Ovary (tissue), 10 donors: ENCODE measurements at regions of chr14 and their contacts with region 1.

Region 1: GRCh38 chr14:64636208-64636979 is 67.8 kb upstream of the PLEKHG3 start:
- DNase-seq: peak; percentile 57 to 82 (median 76)
- H3K4me3 ChIP-seq: no peak overlapping the region
- H3K27ac ChIP-seq: no peak overlapping the region
- H3K4me1 ChIP-seq: no peaks in the 10 kb centered on the region
- H3K27me3 ChIP-seq: no peaks in the 10 kb centered on the region
- CTCF ChIP-seq: peak; percentile 70 to 78 (median 73)
- EP300 ChIP-seq: no peak
- POLR2A ChIP-seq: no peak

Region 2: DNA sequence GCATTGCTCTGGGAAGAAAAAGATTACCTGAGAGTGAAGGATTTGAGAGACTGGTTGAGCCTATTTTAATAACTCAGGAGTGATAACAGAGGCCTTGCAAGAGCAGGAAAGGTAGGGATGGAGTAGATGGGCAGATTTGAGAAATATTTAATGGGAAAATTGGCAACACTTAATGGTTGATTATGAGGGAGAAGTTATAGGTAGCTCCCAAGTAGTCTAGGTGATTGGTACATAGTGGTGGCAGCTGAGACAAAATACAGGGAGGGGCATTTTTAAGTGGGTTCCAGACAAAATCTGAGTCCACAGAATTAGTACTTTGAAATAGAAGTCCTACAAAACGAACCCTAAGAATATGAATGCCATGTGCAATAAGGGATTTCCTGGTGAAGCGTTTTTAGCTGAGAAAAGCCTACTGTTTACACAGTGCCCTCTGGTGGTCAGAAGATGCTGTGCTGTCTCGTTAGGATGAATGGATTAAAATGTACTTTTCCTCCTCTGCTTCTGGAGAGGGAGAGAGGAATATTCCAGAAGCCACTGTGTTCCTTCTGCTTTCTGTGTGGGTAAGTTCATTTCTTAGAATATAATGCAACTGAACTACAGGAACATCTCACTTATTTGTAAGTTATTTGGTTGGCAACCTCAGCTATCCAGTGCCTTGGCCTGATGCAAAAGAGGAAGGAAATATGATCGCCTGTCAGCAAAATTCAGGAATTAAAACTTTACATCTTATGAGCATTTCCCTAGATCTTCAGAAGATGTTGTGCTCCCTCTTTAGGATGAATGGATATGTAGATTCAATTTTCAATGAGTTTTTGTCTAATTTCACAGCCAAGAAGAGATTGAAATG is 125.3 kb before region 1 on chr14:
- intact Hi-C with region 1: loop called in 1 of 4 experiments (anchors 10 kb)
- DNase-seq: peak in 4 of 5 donors; percentile 45 to 76 (median 55)
- H3K4me3 ChIP-seq: no peak overlapping the region
- H3K27ac ChIP-seq: no peak overlapping the region
- H3K4me1 ChIP-seq: peaks cover 5% of the 10 kb centered on the region
- H3K27me3 ChIP-seq: no peaks in the 10 kb centered on the region
- CTCF ChIP-seq: peak; percentile 65 to 82 (median 66)
- EP300 ChIP-seq: no peak
- POLR2A ChIP-seq: no peak

Region 3: DNA sequence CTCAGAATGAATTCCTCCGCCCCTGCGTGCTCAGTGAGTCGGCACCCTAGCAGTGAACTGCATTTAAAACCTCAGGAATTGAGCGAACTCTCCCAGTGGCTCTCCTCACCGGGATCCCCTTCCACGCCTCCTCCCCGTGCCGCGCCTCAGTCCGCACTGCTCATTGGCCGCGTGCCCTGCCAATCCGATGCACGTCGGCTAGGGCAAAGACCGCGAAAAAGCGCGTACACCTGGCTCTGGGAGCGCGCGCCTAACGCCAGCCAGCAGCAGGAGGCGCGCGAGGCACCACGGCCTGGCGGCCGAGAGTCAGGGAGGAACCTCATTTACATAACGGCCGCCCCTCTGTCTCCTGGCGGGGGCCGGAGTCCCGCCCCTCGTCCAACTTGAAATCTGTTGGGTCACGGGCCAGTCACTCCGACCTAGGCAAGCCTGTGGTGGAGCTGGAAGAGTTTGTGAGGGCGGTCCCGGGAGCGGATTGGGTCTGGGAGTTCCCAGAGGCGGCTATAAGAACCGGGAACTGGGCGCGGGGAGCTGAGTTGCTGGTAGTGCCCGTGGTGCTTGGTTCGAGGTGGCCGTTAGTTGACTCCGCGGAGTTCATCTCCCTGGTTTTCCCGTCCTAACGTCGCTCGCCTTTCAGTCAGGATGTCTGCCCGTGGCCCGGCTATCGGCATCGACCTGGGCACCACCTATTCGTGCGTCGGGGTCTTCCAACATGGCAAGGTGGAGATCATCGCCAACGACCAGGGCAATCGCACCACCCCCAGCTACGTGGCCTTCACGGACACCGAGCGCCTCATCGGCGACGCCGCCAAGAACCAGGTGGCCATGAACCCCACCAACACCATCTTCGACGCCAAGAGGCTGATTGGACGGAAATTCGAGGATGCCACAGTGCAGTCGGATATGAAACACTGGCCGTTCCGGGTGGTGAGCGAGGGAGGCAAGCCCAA is 95.9 kb before region 1 on chr14 and contains the start of gene HSPA2:
- intact Hi-C with region 1: loop called in 3 of 4 experiments (anchors 2 to 10 kb)
- DNase-seq: peak; percentile 98 to 100 (median 99)
- H3K4me3 ChIP-seq: peak within 1 kb of the TSS; percentile 65
- H3K27ac ChIP-seq: peak within 1 kb of the TSS in 1 of 2 donors; percentile 57
- H3K4me1 ChIP-seq: peaks cover 8% of the 10 kb centered on the region
- H3K27me3 ChIP-seq: no peaks in the 10 kb centered on the region
- CTCF ChIP-seq: peak; percentile 73 to 93 (median 85)
- EP300 ChIP-seq: no peak
- POLR2A ChIP-seq: peak; percentile 80
- total RNA-seq, gene HSPA2: 5.1 to 49.7 (median 9.9) TPM